Caco-2 (cell line): ENCODE measurements at regions of chr2 and their contacts with region 1.

Region 1: GRCh38 chr2:86298411-86299379 is 38.7 kb downstream of the REEP1 start:
- DNase-seq: peak; percentile 49 to 62
- H3K4me3 ChIP-seq: no peak overlapping the region
- H3K4me3 Mint-ChIP-seq: no peak overlapping the region
- H3K27ac Mint-ChIP-seq: no peak overlapping the region
- H3K4me1 ChIP-seq: no peaks in the 10 kb centered on the region
- H3K4me1 Mint-ChIP-seq: peaks cover 8% of the 10 kb centered on the region
- H3K27me3 ChIP-seq: no peaks in the 10 kb centered on the region
- H3K27me3 Mint-ChIP-seq: no peaks in the 10 kb centered on the region
- CTCF ChIP-seq: peak; percentile 52 to 76

Region 2: GRCh38 chr2:86221066-86221684 is 77.5 kb before region 1 on chr2:
- CTCF ChIA-PET with region 1: interaction called, 4 read pairs
- POLR2A ChIA-PET with region 1: no interaction called
- intact Hi-C with region 1: loop called (anchors 5 kb)
- DNase-seq: peak in 1 of 2 experiments; percentile 43
- H3K4me3 ChIP-seq: no peak overlapping the region
- H3K4me3 Mint-ChIP-seq: no peak overlapping the region
- H3K27ac Mint-ChIP-seq: no peak overlapping the region
- H3K4me1 ChIP-seq: peaks cover 9% of the 10 kb centered on the region
- H3K4me1 Mint-ChIP-seq: peaks cover 30% of the 10 kb centered on the region
- H3K27me3 ChIP-seq: no peaks in the 10 kb centered on the region
- H3K27me3 Mint-ChIP-seq: no peaks in the 10 kb centered on the region
- CTCF ChIP-seq: peak; percentile 69 to 71

Region 3: DNA sequence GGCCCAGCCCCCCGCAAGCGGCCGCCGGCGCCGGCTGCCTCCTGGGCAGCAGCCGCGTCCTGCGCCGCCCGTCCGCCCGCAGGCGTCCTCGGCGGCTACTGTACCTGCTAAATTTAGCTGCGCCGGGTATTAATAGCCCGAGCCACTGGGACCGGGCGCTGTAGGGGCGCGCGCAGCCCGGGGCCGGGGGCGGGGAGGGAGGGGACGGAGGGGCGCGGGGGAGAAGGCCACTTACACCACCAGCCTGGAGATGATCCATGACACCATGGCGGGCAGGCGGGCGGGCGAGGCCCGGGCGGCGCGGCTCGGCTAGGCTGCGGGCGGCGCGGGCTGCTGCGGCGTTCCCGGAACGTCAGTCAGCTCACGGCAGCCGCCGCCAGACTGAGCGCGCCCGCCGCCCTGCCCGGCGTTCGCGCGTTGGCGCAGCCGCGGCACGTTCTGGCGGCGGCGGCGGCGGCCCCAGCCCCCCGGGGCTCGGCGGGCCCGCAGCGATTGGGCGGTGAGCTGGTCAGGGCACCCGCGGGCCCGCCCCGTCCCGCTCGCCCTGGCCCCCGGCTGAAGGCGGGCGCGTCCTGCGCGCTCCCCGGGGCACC is 38.6 kb after region 1 on chr2 and contains the start of gene REEP1:
- CTCF ChIA-PET with region 1: interaction called, 6 read pairs
- POLR2A ChIA-PET with region 1: no interaction called
- intact Hi-C with region 1: loop called (anchors 2 kb)
- DNase-seq: peak in 1 of 2 experiments; percentile 70
- H3K4me3 ChIP-seq: peak within 1 kb of the TSS; percentile 40
- H3K4me3 Mint-ChIP-seq: peak within 1 kb of the TSS; percentile 87
- H3K27ac Mint-ChIP-seq: no peak within 1 kb of the TSS
- H3K4me1 ChIP-seq: peaks cover 9% of the 10 kb centered on the region
- H3K4me1 Mint-ChIP-seq: peaks cover 19% of the 10 kb centered on the region
- H3K27me3 ChIP-seq: no peaks in the 10 kb centered on the region
- H3K27me3 Mint-ChIP-seq: peaks cover 3% of the 10 kb centered on the region
- CTCF ChIP-seq: no peak
- total RNA-seq, gene REEP1: 14.9 and 16.6 TPM in 2 replicates